K562 (cell line): ENCODE measurements at regions of chr2 and their contacts with region 1.

Region 1: DNA sequence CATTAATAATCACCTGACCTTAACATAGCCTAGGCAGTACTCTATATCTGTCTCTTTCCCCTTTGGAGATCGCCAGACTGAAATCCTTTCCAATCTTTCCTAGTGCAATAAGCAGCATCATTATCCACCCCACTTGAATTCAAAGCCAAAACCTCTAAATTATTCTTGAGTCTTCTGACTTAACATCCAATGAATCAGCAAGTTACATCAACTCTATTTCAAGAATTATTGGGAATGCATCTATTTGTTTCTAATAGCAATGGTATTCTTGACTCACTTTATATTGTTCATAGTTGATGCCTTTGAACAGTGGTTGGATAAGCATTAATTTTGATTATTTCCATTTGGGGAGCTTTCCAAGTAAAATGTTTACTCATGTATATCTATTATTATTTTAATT is 144.8 kb downstream of the ZNF804A start:
- DNase-seq: no peak
- ATAC-seq: no peak
- H3K4me3 ChIP-seq: no peak overlapping the region
- H3K27ac ChIP-seq: no peak overlapping the region
- H3K4me1 ChIP-seq: no peaks in the 10 kb centered on the region
- H3K27me3 ChIP-seq: no peaks in the 10 kb centered on the region
- CTCF ChIP-seq: no peak
- EP300 ChIP-seq: no peak
- POLR2A ChIP-seq: no peak
- RAD21 ChIP-seq: no peak

Region 2: DNA sequence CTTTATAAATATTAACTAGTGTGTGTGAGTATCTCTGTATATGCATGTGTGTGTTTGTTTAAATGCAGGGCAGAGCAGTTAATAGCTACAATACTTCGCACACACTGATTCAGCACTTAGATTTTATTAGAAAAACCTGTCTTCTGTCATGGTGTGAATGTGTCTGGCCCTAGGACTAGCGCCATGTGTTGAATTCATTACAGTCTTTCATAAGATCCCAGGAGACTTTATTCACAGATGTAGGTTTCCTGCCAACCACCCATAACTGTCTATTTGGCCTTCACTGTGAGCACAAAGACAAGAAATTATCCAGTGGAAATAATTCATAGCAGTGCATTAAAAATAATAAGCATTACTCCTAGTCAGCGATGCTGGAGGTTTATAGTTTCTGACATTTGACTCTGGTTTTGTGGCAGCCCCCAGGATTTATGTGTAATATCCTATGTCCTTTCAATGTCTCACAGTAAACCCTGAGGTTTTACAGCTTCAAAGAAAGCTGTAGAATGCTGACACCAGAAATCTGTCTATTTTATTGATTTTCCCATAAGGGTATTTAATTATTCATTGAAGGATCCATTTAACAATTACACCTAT is 50.9 kb before region 1 on chr2:
- CTCF ChIA-PET with region 1: no interaction called
- POLR2A ChIA-PET with region 1: no interaction called
- in situ Hi-C with region 1: no loop called
- intact Hi-C with region 1: no loop called
- DNase-seq: no peak
- ATAC-seq: no peak
- H3K4me3 ChIP-seq: no peak overlapping the region
- H3K27ac ChIP-seq: no peak overlapping the region
- H3K4me1 ChIP-seq: no peaks in the 10 kb centered on the region
- H3K27me3 ChIP-seq: no peaks in the 10 kb centered on the region
- CTCF ChIP-seq: no peak
- EP300 ChIP-seq: no peak
- POLR2A ChIP-seq: no peak
- RAD21 ChIP-seq: no peak

Region 3: DNA sequence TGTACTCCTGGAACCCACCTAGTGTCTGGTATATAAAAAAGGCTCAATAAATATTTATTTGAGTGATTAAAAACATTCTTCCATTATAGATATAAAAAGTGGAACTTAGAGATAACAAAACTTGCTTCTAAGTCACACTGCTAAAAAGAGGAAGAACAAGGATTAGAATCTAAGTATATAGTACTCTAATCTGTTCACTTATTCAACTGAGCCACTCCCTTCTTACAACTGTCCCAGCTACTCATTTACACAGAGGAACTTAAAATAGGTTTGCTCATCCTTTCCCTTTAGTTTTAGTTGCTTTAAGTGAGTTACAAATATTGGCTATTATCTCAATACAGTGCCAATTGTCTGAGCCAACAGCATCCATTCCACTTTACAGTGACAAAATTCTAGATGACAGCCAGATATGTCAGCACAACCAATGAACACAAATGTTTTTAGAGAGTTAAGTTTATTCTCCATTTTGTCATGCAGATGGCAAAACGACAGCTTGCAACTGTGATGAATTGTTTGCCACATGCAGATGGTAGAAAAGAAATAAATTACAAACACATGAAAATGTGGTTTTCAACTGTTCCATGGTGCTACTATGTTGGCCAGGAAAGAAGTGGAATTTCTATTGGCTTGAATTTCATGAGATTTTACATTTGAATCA is 1462.3 kb after region 1 on chr2:
- CTCF ChIA-PET with region 1: no interaction called
- POLR2A ChIA-PET with region 1: no interaction called
- in situ Hi-C with region 1: no loop called
- intact Hi-C with region 1: loop called (anchors 5 kb)
- DNase-seq: no peak
- ATAC-seq: no peak
- H3K4me3 ChIP-seq: no peak overlapping the region
- H3K27ac ChIP-seq: no peak overlapping the region
- H3K4me1 ChIP-seq: no peaks in the 10 kb centered on the region
- H3K27me3 ChIP-seq: no peaks in the 10 kb centered on the region
- CTCF ChIP-seq: no peak
- EP300 ChIP-seq: no peak
- POLR2A ChIP-seq: no peak
- RAD21 ChIP-seq: no peak